ENCODE measurements at regions of chr4 and their contacts with region 1.

Region 1: DNA sequence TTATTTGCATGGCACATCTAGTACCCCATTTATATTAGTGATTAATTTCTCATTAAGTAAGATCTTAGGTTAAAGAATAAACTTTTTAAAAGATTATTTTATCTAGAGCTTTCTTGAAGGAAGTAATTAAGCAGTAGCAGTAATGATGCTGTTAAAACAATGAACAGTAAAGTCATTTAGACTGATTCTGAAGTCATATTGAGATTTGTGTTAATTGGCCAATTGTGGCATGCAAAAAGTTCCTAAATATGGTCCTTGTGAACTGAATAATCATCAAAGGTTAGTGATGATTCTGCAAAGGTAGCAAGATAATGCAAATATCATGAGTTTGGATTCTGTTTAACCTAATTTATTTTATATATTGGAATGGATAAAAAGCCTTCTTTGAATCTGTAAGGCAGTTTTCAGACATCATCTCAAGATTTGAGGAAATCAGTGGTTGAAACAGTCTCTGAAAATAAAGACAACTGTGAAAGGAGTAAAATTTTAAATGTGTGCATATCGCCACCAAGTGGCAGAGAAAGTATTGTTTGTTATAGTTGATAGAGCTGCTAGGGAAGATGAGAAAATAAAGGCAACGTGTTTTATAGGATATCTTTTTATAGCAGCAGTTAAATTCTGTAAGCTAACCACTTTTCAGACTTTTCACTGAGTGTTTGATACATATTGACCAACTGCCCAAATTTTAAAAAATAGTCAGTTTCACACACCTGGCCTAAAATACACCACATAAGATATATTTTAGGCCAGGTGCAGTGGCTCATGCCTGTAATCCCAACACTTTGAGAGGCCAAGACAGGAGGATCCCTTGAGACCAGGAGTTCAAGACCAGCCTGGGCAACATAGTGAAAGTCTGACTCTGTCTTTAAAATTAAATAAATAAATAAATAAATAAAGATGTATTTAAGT is 79.6 kb downstream of the CCKAR start:
- DNase-seq: no peak
- H3K4me3 Mint-ChIP-seq: no peak overlapping the region
- H3K27ac Mint-ChIP-seq: no peak overlapping the region
- H3K4me1 Mint-ChIP-seq: peaks cover 2% of the 10 kb centered on the region
- H3K27me3 Mint-ChIP-seq: no peaks in the 10 kb centered on the region

Region 2: GRCh38 chr4:25986807-25987206 is 423.8 kb before region 1 on chr4:
- CTCF ChIA-PET with region 1: interaction called, 44 read pairs
- POLR2A ChIA-PET with region 1: no interaction called
- intact Hi-C with region 1: no loop called
- DNase-seq: no peak
- H3K4me3 Mint-ChIP-seq: no peak overlapping the region
- H3K27ac Mint-ChIP-seq: no peak overlapping the region
- H3K4me1 Mint-ChIP-seq: peaks cover 5% of the 10 kb centered on the region
- H3K27me3 Mint-ChIP-seq: no peaks in the 10 kb centered on the region

Region 3: GRCh38 chr4:26028793-26029567 is 381.7 kb before region 1 on chr4:
- CTCF ChIA-PET with region 1: interaction called, 30 read pairs
- POLR2A ChIA-PET with region 1: no interaction called
- intact Hi-C with region 1: loop called (anchors 1 kb)
- DNase-seq: peak; percentile 85
- H3K4me3 Mint-ChIP-seq: no peak overlapping the region
- H3K27ac Mint-ChIP-seq: no peak overlapping the region
- H3K4me1 Mint-ChIP-seq: peaks cover 16% of the 10 kb centered on the region
- H3K27me3 Mint-ChIP-seq: peaks cover 2% of the 10 kb centered on the region

Region 4: DNA sequence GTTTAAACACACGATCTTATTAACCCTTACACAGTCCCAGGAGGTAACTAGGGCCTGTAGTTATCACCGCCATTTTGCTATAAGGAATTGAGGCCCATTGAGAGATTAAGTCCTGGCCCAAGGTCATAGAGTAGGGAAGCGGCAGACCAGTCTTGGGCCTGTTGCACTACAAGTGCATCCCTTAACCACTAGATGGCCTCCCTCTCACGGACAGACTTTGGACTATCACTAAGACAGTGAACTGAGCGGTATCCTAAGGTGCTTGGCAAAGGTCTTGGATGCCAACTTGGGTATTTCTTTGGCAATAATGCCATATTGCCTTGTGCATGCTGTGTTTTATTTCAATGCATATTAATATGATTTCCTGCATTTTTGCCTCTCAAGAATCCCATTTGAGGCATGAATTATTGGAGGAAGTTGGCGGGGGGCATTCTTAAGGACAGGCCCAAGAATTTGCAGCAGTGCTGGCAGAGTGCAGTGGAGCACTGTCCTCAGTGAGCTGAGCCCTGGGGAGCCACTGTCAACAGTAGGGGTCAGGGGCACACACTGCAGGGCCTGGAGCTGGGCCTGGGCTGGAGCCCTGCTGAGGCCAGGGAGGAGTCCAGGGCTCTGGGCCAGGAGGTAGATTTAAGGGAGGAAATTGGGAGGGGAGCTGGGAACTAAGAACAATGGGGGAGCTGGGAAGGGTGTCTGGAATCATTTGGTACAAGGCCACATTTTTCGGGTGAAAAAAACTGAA is 349.2 kb before region 1 on chr4:
- CTCF ChIA-PET with region 1: interaction called, 9 read pairs
- POLR2A ChIA-PET with region 1: no interaction called
- intact Hi-C with region 1: loop called (anchors 2 kb)
- DNase-seq: peak; percentile 43
- H3K4me3 Mint-ChIP-seq: no peak overlapping the region
- H3K27ac Mint-ChIP-seq: no peak overlapping the region
- H3K4me1 Mint-ChIP-seq: peaks cover 26% of the 10 kb centered on the region
- H3K27me3 Mint-ChIP-seq: no peaks in the 10 kb centered on the region

Region 5: DNA sequence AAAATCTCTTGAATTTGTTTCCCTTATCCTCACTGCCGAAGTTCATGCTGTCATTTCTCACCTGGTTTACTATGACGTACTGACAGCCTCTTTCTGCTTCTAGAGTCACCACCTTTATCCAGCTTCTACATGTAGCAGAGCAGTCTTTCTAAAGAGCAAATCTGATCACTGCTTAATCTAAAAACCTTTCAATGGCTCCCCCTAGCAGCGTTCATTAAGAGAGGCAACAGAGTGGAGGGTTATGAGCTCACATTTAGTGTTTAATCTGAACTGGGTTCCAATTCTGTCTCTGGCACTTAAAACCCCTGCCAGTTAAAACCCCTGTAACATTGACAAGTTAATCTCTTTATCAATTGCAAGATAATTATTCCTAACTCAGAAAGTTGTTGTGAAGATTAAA is 85.4 kb before region 1 on chr4:
- CTCF ChIA-PET with region 1: interaction called, 136 read pairs
- POLR2A ChIA-PET with region 1: no interaction called
- intact Hi-C with region 1: loop called (anchors 1 kb)
- DNase-seq: no peak
- H3K4me3 Mint-ChIP-seq: peak overlapping the region; percentile 62
- H3K27ac Mint-ChIP-seq: peak overlapping the region; percentile 78
- H3K4me1 Mint-ChIP-seq: peaks cover 47% of the 10 kb centered on the region
- H3K27me3 Mint-ChIP-seq: no peaks in the 10 kb centered on the region

Region 6: DNA sequence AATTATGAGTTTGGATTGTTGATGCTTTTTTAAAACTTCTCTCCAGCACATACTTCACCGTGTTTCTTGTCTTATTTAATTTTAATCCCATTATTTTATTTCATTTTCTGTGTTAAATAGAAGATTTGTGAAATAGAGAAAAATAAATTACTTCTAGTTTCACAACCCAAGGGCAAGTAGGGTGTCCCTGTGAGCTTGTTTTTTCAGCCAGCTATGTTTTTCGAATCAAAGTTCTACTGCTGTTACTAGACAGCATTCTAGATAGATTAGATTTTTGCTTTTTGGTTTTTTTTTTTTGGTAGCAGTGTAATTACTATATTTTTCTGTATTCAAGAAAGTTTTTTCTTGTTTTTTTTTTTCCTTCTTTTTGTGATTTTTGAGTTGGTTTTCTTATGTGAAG is 29.9 kb before region 1 on chr4:
- CTCF ChIA-PET with region 1: interaction called, 5 read pairs
- POLR2A ChIA-PET with region 1: no interaction called
- intact Hi-C with region 1: loop called (anchors 2 kb)
- DNase-seq: no peak
- H3K4me3 Mint-ChIP-seq: no peak overlapping the region
- H3K27ac Mint-ChIP-seq: no peak overlapping the region
- H3K4me1 Mint-ChIP-seq: peaks cover 56% of the 10 kb centered on the region
- H3K27me3 Mint-ChIP-seq: no peaks in the 10 kb centered on the region